Activated T-helper 2 cell treated with anti-CD3 and anti-CD28 coated beads, Interferon-gamma antibody, Interleukin-2, Interleukin-4, amounts not matched to agents 10 μg/mL and 5 μg/mL and 100 μg/mL, durations not matched to agents 14 hours and 24 hours and 36 hours (primary cell): ENCODE measurements at regions of chr5 and their contacts with region 1.

Region 1: GRCh38 chr5:159341914-159342313 is 11.6 kb upstream of the IL12B start:
- DNase-seq: peak; percentile 28
- H3K4me3 Mint-ChIP-seq: no peak overlapping the region
- H3K27ac Mint-ChIP-seq: no peak overlapping the region
- H3K4me1 Mint-ChIP-seq: peaks cover 50% of the 10 kb centered on the region
- H3K27me3 Mint-ChIP-seq: peaks cover 14% of the 10 kb centered on the region

Region 2: DNA sequence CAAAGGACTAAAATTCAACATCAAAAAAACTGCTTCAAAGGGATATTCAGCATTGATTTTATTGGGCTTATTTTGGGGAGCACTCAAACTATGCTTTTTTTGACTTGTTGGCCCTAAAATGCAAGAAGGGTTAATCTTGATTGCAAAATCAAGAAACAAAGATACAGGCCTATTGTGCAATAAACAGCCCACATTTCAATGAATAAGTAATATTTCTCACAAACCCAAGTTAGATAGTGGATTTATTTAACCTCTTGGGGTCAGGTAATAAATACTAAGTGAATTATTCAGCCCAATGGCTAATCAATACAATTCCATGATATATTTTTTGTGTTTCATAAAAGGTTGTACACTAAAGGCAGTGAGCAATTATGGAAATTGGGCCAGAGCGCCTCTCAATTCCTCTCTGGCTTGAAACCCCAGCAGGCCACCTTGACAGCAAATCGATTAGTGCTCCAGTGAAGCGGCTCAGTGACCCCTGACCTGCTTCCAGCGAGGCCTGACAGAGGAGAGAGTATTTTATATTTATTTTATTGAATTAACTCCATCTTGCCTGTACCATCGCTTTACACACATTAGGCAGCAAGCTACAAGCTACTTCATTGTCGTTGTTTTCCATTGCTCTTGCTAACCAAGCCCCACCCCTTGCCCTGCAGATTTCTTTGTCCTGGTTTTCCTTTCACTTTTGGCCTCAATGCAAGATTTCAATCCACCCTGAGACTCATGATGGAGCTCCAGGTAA is 307.7 kb before region 1 on chr5:
- intact Hi-C with region 1: no loop called
- DNase-seq: no peak
- H3K4me3 Mint-ChIP-seq: no peak overlapping the region
- H3K27ac Mint-ChIP-seq: no peak overlapping the region
- H3K4me1 Mint-ChIP-seq: no peaks in the 10 kb centered on the region
- H3K27me3 Mint-ChIP-seq: peaks cover 19% of the 10 kb centered on the region

Region 3: GRCh38 chr5:159412284-159413046 is 70.6 kb after region 1 on chr5:
- intact Hi-C with region 1: loop called (anchors 1 kb)
- DNase-seq: peak; percentile 79
- H3K4me3 Mint-ChIP-seq: no peak overlapping the region
- H3K27ac Mint-ChIP-seq: no peak overlapping the region
- H3K4me1 Mint-ChIP-seq: peaks cover 48% of the 10 kb centered on the region
- H3K27me3 Mint-ChIP-seq: peaks cover 32% of the 10 kb centered on the region